ENCODE measurements at regions of chr2 and their contacts with region 1.

Region 1: DNA sequence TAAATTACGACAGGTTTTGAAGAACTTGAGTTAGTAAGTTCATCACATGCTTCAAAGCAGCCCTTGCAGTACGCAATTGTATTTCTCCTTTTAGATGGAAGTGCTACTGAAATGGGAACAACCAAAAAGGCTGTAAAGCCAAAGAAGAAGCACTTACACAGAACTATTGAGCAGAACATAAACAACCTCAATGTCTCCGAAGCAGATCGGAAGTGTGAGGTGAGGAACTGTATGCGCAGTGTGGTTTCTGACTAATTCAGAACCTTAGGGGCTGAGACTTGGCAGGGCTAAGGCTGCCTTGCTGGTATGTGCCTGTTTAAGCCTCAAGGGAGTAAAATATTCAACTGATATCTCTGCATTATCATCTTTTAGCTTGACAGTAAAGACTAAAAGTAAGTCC is 8.4 kb downstream of the NCAPH start:
- DNase-seq: peak; percentile 60
- H3K4me3 Mint-ChIP-seq: peak overlapping the region; percentile 45
- H3K27ac Mint-ChIP-seq: peak overlapping the region; percentile 66
- H3K4me1 Mint-ChIP-seq: peaks cover 72% of the 10 kb centered on the region
- H3K27me3 Mint-ChIP-seq: no peaks in the 10 kb centered on the region

Region 2: GRCh38 chr2:96145036-96145847 is 198.8 kb before region 1 on chr2 and contains the start of gene DUSP2:
- intact Hi-C with region 1: loop called (anchors 5 kb)
- DNase-seq: peak; percentile 83
- H3K4me3 Mint-ChIP-seq: peak within 1 kb of the TSS; percentile 95
- H3K27ac Mint-ChIP-seq: peak within 1 kb of the TSS; percentile 97
- H3K4me1 Mint-ChIP-seq: peaks cover 49% of the 10 kb centered on the region
- H3K27me3 Mint-ChIP-seq: no peaks in the 10 kb centered on the region
- total RNA-seq, gene DUSP2: 238 and 260 TPM in 2 replicates

Region 3: DNA sequence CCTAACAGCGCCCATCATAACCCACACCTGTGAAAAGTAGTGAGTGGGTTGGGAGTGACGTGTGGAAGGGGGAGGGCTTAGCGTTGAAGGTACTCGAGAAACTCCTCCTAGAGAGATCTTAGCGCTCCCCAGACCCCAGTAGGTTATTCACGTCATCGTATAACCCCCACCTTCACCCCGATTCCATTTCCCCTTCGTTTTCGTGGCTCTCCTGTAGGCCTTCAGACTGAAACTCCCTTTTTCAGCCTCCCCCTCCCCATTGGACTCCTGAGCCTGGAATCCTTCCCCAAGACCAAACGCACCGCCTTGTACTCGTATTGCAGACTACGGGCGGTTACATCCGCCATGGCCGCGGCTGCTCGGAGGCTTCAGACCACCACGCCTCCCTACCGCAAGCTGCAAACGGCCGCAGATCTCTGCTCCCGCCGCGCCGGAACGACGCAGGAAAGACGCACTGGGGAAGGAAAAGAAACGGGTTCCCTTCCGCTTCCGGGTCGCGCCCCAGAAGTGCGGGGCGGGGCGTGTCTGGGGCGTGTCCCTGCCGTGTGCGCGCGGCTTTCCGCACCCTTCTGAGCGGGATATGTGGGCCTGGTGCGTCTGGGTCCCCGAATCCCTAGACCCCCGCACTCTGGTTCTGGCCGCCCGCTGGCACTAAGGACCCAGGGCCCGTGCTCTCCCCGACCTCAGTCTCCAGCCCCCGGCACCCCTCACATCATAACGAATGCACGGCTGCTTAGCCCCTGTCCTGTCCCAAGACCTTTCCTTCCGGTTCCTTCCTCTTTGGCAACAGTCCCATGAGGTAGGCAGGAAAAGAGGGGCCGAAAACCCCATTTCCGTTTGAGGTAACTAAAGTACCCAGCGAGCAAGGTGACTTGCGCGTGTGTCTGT is 38.7 kb before region 1 on chr2 and contains the start of gene SNRNP200:
- intact Hi-C with region 1: loop called (anchors 1 kb)
- DNase-seq: peak; percentile 88
- H3K4me3 Mint-ChIP-seq: peak within 1 kb of the TSS; percentile 95
- H3K27ac Mint-ChIP-seq: peak within 1 kb of the TSS; percentile 94
- H3K4me1 Mint-ChIP-seq: peaks cover 45% of the 10 kb centered on the region
- H3K27me3 Mint-ChIP-seq: no peaks in the 10 kb centered on the region
- total RNA-seq, gene SNRNP200: 191 TPM in 2 replicates

Region 4: DNA sequence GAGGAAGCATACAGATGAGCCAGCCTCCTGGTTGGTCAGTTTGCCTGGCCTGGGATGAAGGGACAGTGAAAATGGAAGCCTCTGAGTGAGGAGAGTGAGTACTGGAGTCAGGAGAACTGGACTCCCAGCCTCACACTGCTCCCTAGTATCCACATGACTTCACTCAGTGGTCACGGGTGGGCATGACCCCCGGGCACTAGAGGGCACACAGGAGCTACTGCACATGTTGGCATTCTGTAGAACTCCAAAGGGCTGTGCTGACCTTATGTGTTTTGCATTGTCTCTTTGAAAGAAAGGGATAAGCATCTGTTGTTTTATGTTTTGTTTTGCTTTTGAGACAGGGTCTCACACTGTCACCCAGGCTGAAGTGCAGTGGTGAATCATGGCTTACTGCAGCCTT is 15.3 kb after region 1 on chr2:
- intact Hi-C with region 1: loop called (anchors 1 kb)
- DNase-seq: no peak
- H3K4me3 Mint-ChIP-seq: no peak overlapping the region
- H3K27ac Mint-ChIP-seq: peak overlapping the region; percentile 55
- H3K4me1 Mint-ChIP-seq: peaks cover 34% of the 10 kb centered on the region
- H3K27me3 Mint-ChIP-seq: no peaks in the 10 kb centered on the region

Region 5: GRCh38 chr2:96527286-96528005 is 183.4 kb after region 1 on chr2:
- intact Hi-C with region 1: loop called (anchors 1 kb)
- DNase-seq: peak; percentile 70
- H3K4me3 Mint-ChIP-seq: peak overlapping the region; percentile 66
- H3K27ac Mint-ChIP-seq: peak overlapping the region; percentile 88
- H3K4me1 Mint-ChIP-seq: peaks cover 91% of the 10 kb centered on the region
- H3K27me3 Mint-ChIP-seq: no peaks in the 10 kb centered on the region